Dorsolateral prefrontal cortex (tissue), 120 donors: ENCODE measurements at regions of chr6 and their contacts with region 1.

Region 1: DNA sequence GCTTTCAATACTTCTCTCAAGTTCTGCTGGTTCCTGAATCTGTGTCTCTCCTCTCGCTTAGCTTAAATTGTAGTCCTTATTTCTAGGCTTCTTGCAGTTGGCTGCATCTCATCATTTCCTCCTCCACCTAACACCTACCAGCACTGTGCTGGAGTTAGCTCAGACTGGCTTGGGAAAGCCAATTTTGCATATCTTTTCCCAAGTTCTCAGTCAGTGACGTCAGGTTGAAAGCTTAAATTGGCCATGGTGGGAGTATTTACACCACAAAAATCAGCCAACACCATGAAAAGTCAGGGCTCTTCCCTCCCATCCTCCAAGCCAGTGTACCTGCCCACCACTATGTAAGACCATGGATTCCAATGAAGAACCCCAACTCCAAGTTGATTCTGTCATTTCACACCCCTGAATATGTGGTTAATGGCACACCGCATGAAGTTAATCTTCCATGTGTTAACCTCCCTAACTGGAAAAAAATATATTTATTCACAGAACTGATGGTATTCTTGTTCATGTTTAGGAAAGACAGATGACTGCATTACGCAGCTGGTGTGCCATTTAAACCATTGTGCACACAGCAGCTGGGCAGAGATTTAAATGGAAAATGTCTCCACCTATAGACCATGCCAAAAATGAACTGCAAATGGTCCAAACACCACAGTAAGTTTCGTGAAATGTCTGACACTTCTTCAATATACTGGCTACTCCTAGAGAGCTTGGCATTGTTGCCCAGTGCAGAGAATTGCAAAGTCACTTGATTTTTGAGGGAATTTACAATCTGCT is 274.1 kb upstream of the MAP3K7 start:
- DNase-seq: peak in 1 of 10 donors; percentile 52
- H3K4me3 ChIP-seq: no peak overlapping the region
- H3K27ac ChIP-seq: peak overlapping the region in 10 of 59 donors; percentile 5 to 48 (median 22)
- H3K27me3 ChIP-seq: no peaks in the 10 kb centered on the region
- CTCF ChIP-seq: peak in 9 of 56 donors; percentile 9 to 32 (median 23)

Region 2: DNA sequence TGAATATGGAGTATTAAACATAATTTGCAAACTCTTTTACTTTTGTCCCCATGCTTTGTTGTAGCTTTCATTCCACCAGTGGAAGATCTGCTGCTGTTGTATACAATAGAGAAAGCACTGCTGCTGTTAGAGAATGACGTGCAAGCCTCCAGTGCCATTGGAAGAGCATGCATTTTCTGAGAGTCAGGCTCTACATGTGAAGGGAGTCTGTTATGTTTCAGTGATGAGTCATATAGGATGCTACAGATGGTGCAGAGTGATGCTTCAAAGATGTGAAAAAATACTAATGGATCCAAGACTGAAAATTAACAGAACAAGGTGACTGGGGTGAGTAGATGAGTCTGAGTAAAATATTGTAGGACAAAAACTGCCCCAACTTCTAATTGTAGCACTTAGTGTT is 542.0 kb before region 1 on chr6:
- intact Hi-C with region 1: no loop called
- DNase-seq: no peak
- H3K4me3 ChIP-seq: no peak overlapping the region
- H3K27ac ChIP-seq: no peak overlapping the region
- H3K27me3 ChIP-seq: no peaks in the 10 kb centered on the region
- CTCF ChIP-seq: no peak

Region 3: GRCh38 chr6:90362318-90362717 is 498.7 kb before region 1 on chr6:
- intact Hi-C with region 1: no loop called
- DNase-seq: peak in 2 of 10 donors; percentile 29 to 37
- H3K4me3 ChIP-seq: peak overlapping the region in 12 of 59 donors; percentile 2 to 20 (median 16)
- H3K27ac ChIP-seq: no peak overlapping the region
- H3K27me3 ChIP-seq: no peaks in the 10 kb centered on the region
- CTCF ChIP-seq: no peak

Region 4: DNA sequence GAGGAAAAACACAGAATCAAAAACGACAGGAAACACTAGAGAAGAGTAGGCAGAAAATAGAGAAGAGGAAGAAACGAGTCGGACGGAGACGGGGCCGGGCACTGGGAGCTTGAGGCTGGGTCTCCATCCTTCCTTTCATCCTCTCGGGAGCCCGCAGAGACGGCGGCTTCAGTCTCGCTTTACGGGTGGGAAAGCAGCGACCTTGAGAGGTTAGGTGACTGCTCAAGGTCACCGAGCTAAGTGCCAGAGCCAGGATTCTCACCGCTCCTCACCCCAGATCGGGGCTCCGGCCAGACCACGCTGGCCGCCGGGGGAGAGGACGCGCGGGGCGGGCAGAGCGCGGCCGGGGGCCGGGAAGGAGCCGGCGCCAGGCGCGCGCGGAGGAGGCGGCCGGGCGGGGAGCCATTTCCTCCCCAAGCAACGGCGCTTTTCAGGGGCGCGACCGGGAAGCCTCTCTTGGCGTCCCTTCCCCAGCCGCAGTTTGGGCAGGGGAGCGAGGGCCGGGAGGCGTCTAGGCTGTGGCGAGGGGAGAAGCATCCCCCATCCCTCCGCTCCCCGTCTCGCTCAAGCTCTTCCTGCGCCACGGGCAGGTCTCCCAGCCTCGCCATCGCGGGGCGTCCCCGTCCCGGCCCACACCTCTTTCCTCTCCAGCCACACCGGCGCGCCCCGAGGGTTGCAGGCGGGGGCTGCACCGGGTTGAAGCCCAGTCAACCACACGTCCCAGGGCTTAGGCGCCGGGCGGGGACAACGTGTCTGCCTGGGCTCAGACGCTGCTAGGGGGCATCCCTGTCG is 250.1 kb before region 1 on chr6:
- intact Hi-C with region 1: loop called in 1 of 2 experiments (anchors 1 kb)
- DNase-seq: peak; percentile 27 to 65 (median 52)
- H3K4me3 ChIP-seq: peak overlapping the region; percentile 54 to 86 (median 72)
- H3K27ac ChIP-seq: peak overlapping the region in 58 of 59 donors; percentile 54 to 97 (median 91)
- H3K27me3 ChIP-seq: peaks cover 0 to 13% (median 0%) of the 10 kb centered on the region in 45 donors
- CTCF ChIP-seq: peak in 10 of 56 donors; percentile 9 to 44 (median 24)

Region 5: GRCh38 chr6:90790696-90791095 is 70.3 kb before region 1 on chr6:
- intact Hi-C with region 1: no loop called
- DNase-seq: no peak
- H3K4me3 ChIP-seq: no peak overlapping the region
- H3K27ac ChIP-seq: no peak overlapping the region
- H3K27me3 ChIP-seq: no peaks in the 10 kb centered on the region
- CTCF ChIP-seq: no peak

Region 6: GRCh38 chr6:91045161-91045560 is 184.1 kb after region 1 on chr6:
- intact Hi-C with region 1: no loop called
- DNase-seq: no peak
- H3K4me3 ChIP-seq: no peak overlapping the region
- H3K27ac ChIP-seq: no peak overlapping the region
- H3K27me3 ChIP-seq: no peaks in the 10 kb centered on the region
- CTCF ChIP-seq: no peak